Activated CD4-positive, alpha-beta T cell treated with anti-CD3 and anti-CD28 coated beads, Interleukin-2, amount 10 ng/mL, durations not matched to agents 24 days and 14 days (primary cell): ENCODE measurements at regions of chr21 and their contacts with region 1.

Region 1: DNA sequence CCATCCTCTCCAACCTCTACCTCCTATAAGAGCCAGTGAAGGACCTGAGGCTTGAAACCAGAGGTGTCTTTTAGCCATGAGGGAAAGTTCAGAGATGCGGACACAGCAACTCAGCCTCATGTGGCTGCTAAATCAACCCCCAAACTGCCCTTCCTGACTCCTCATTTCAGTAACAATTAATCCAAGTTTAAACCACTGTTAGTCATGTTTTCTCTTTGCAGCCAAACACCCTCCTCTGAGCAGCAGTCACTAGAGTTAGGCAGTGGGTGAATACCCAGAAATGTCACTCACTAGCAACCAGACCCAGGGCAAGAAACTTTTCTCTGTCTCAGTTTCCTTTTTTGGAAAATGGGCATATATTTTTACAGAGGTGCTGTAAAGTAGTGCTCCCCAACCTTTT is 71.2 kb downstream of the KCNJ15 start:
- DNase-seq: no peak
- H3K4me3 Mint-ChIP-seq: peak overlapping the region; percentile 18
- H3K27ac Mint-ChIP-seq: peak overlapping the region; percentile 58
- H3K4me1 Mint-ChIP-seq: peaks cover 15% of the 10 kb centered on the region
- H3K27me3 Mint-ChIP-seq: peaks cover 2% of the 10 kb centered on the region

Region 2: GRCh38 chr21:38300141-38300578 is 27.8 kb before region 1 on chr21:
- intact Hi-C with region 1: loop called (anchors 2 kb)
- DNase-seq: peak; percentile 66
- H3K4me3 Mint-ChIP-seq: peak overlapping the region; percentile 69
- H3K27ac Mint-ChIP-seq: peak overlapping the region; percentile 72
- H3K4me1 Mint-ChIP-seq: peaks cover 33% of the 10 kb centered on the region
- H3K27me3 Mint-ChIP-seq: peaks cover 2% of the 10 kb centered on the region